GM10248 (cell line): ENCODE measurements at regions of chr1 and their contacts with region 1.

Region 1: GRCh38 chr1:45359882-45360513 is 19.8 kb upstream of the MUTYH start:
- DNase-seq: no peak
- CTCF ChIP-seq: peak; percentile 58

Region 2: DNA sequence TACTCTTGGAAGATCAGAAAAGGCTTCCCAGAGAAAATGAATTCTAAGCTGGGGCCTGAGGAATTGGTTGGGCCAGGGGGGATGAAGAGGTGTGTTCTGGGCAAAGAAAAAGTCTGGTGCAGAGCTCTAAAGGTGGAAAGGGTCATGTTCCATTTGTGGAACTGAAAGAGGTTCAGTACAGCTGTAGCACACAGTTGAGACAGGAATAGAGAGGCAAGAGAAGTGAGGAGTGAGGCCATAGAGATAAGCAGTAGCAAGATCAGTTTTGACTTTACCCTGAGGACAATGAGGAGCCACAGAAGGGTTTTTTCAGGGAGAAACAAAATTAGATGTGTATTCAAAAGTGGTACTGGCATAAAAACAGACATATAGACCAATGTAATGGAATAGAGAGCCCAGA is 10.6 kb after region 1 on chr1:
- CTCF ChIA-PET with region 1: interaction called, 18 read pairs
- POLR2A ChIA-PET with region 1: no interaction called
- DNase-seq: peak; percentile 38
- CTCF ChIP-seq: no peak

Region 3: DNA sequence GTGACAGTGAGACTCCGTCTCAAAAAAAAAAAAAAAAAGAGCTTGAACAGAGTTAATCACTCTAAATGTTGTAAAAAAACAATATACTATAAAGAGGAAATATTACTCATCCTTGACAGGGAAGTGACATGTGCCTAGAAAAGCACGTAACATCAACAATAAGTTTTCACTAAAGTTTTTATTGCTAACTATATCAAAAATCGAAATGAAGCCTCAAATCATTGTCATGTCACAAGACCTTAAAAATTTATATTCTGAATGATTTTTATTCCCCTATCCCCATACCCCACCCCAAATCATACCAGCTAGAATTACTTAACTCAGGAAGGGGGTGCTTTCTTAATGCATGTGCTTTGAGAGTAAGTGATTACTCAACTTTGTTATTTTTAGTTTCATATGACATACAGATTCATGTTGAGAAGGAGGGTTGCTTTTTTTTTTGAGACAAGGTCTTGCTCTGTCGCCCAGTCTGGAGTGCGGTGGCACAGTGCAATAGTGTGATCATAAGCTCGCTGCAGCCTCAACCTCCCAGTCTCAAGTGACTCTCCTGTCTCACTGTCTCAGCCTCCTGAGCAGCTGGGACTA is 33.8 kb after region 1 on chr1:
- CTCF ChIA-PET with region 1: interaction called, 10 read pairs
- POLR2A ChIA-PET with region 1: no interaction called
- DNase-seq: peak; percentile 42
- CTCF ChIP-seq: no peak